ENCODE measurements at regions of chr19 and their contacts with region 1.

Region 1: DNA sequence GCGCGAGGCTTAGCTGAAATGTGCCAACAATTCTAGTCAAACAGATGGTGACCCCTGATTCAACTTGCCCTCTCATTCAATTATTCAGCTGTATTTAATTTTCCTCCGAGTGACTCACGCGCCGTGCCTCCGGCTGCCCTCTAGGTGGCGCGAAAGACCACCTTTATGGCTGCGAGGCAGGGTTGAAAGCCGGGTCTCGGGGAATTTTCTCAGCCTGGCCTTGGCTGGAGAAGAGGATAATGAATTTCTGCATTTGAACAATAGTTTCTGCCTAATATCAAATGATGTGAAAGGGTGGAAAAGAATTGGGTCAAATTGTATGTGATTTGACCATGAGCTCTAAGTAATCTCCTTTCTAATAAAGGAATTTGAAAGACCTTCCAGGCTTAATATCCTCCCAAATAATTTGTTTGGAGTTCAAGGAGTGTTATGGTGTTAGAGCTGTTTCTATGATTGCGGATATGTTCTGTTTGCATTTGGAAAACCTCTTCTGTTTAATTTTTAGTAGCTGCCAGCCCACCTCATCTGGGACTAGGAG is 310.9 kb downstream of the ZNF536 start:
- DNase-seq: peak; percentile 88
- H3K4me3 ChIP-seq: peak overlapping the region in 1 of 2 experiments; percentile 7; a peak in 1 of 4 replicates
- H3K27ac ChIP-seq: peak overlapping the region in 1 of 2 experiments; percentile 65; a peak in 2 of 4 replicates
- H3K4me1 ChIP-seq: peaks cover 0 to 48% of the 10 kb centered on the region in 2 experiments; a peak in 2 of 4 replicates
- H3K27me3 ChIP-seq: no peaks in the 10 kb centered on the region
- CTCF ChIP-seq: peak; percentile 97
- EP300 ChIP-seq: peak in 1 of 2 experiments; percentile 71; a peak in 1 of 4 replicates
- RAD21 ChIP-seq: peak; percentile 99

Region 2: GRCh38 chr19:30696514-30696913 is 13.4 kb after region 1 on chr19:
- CTCF ChIA-PET with region 1: interaction called, 28 read pairs
- POLR2A ChIA-PET with region 1: no interaction called
- DNase-seq: peak; percentile 52
- H3K4me3 ChIP-seq: no peak overlapping the region; a peak in 1 of 4 replicates
- H3K27ac ChIP-seq: no peak overlapping the region
- H3K4me1 ChIP-seq: peaks cover 5 to 41% of the 10 kb centered on the region in 2 experiments; a peak in 3 of 4 replicates
- H3K27me3 ChIP-seq: no peaks in the 10 kb centered on the region; the same call in 1 of the 2 replicates
- CTCF ChIP-seq: no peak
- EP300 ChIP-seq: no peak
- RAD21 ChIP-seq: peak; percentile 47

Region 3: GRCh38 chr19:30733826-30734550 is 50.9 kb after region 1 on chr19:
- CTCF ChIA-PET with region 1: interaction called, 38 read pairs
- POLR2A ChIA-PET with region 1: no interaction called
- DNase-seq: peak; percentile 67
- H3K4me3 ChIP-seq: no peak overlapping the region
- H3K27ac ChIP-seq: peak overlapping the region in 1 of 2 experiments; percentile 47; a peak in 1 of 4 replicates
- H3K4me1 ChIP-seq: peaks cover 0 to 29% of the 10 kb centered on the region in 2 experiments; a peak in 1 of 4 replicates
- H3K27me3 ChIP-seq: no peaks in the 10 kb centered on the region
- CTCF ChIP-seq: no peak
- EP300 ChIP-seq: no peak
- RAD21 ChIP-seq: peak; percentile 77

Region 4: GRCh38 chr19:31099515-31100205 is 416.6 kb after region 1 on chr19:
- CTCF ChIA-PET with region 1: interaction called, 13 read pairs
- POLR2A ChIA-PET with region 1: no interaction called
- DNase-seq: peak; percentile 29
- H3K4me3 ChIP-seq: no peak overlapping the region
- H3K27ac ChIP-seq: no peak overlapping the region
- H3K4me1 ChIP-seq: peaks cover 6 to 9% of the 10 kb centered on the region in 2 experiments; a peak in 2 of 4 replicates
- H3K27me3 ChIP-seq: no peaks in the 10 kb centered on the region
- CTCF ChIP-seq: no peak
- EP300 ChIP-seq: no peak
- RAD21 ChIP-seq: no peak; the same call in 1 of the 2 replicates

Region 5: GRCh38 chr19:31338069-31338776 is 655.2 kb after region 1 on chr19:
- CTCF ChIA-PET with region 1: interaction called, 11 read pairs
- POLR2A ChIA-PET with region 1: interaction called, 3 read pairs
- DNase-seq: peak; percentile 80
- H3K4me3 ChIP-seq: no peak overlapping the region; a peak in 1 of 4 replicates
- H3K27ac ChIP-seq: peak overlapping the region in 1 of 2 experiments; percentile 98; a peak in 2 of 4 replicates
- H3K4me1 ChIP-seq: peaks cover 42 to 67% of the 10 kb centered on the region in 2 experiments
- H3K27me3 ChIP-seq: no peaks in the 10 kb centered on the region
- CTCF ChIP-seq: peak; percentile 60
- EP300 ChIP-seq: peak in 1 of 2 experiments; percentile 69; a peak in 1 of 4 replicates
- RAD21 ChIP-seq: peak; percentile 73

Region 6: GRCh38 chr19:32224371-32225244 is 1541.5 kb after region 1 on chr19:
- CTCF ChIA-PET with region 1: interaction called, 52 read pairs
- POLR2A ChIA-PET with region 1: no interaction called
- DNase-seq: peak; percentile 94
- H3K4me3 ChIP-seq: peak overlapping the region in 1 of 2 experiments; percentile 44; a peak in 1 of 4 replicates
- H3K27ac ChIP-seq: no peak overlapping the region
- H3K4me1 ChIP-seq: no peaks in the 10 kb centered on the region; a peak in 1 of 4 replicates
- H3K27me3 ChIP-seq: no peaks in the 10 kb centered on the region
- CTCF ChIP-seq: peak; percentile 93
- EP300 ChIP-seq: no peak
- RAD21 ChIP-seq: peak; percentile 92

Region 7: GRCh38 chr19:32570081-32570785 is 1887.2 kb after region 1 on chr19:
- CTCF ChIA-PET with region 1: interaction called, 12 read pairs
- POLR2A ChIA-PET with region 1: no interaction called
- DNase-seq: peak; percentile 75
- H3K4me3 ChIP-seq: peak overlapping the region; percentile 23 to 60
- H3K27ac ChIP-seq: no peak overlapping the region
- H3K4me1 ChIP-seq: no peaks in the 10 kb centered on the region
- H3K27me3 ChIP-seq: no peaks in the 10 kb centered on the region; the same call in 1 of the 2 replicates
- CTCF ChIP-seq: peak; percentile 91
- EP300 ChIP-seq: no peak
- RAD21 ChIP-seq: peak; percentile 93